CD8-positive, alpha-beta T cell (primary cell): ENCODE measurements at regions of chr2 and their contacts with region 1.

Region 1: DNA sequence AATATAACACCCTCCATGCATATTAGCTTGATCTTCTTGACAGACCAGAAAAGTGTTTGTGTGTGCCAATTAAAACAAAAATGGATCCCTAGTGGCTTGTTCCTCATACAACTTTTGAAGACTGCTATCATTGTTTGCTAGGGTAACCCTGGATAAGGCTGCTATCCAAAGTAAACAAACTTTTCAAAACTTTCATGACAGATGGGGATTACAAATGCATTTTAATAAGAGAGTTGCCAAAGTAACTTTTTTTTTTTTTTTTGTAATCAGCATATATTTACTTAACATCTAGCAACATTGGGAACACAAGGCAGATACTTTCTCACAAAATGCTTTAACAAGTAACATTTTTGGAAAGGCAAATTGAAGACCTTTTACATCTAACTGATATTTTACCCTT is 300.7 kb downstream of the ARHGAP15 start:
- DNase-seq: no peak
- ATAC-seq: no peak
- H3K4me3 ChIP-seq: no peak overlapping the region
- H3K4me3 Mint-ChIP-seq: no peak overlapping the region
- H3K27ac ChIP-seq: no peak overlapping the region
- H3K27ac Mint-ChIP-seq: peak overlapping the region; percentile 72
- H3K4me1 ChIP-seq: no peaks in the 10 kb centered on the region
- H3K4me1 Mint-ChIP-seq: peaks cover 80% of the 10 kb centered on the region
- H3K27me3 ChIP-seq: no peaks in the 10 kb centered on the region
- H3K27me3 Mint-ChIP-seq: no peaks in the 10 kb centered on the region
- CTCF ChIP-seq: no peak

Region 2: GRCh38 chr2:143442193-143442592 is 12.3 kb after region 1 on chr2:
- CTCF ChIA-PET with region 1: interaction called, 4 read pairs
- POLR2A ChIA-PET with region 1: no interaction called
- intact Hi-C with region 1: loop called in 1 of 2 experiments (anchors 2 kb)
- DNase-seq: no peak
- ATAC-seq: no peak
- H3K4me3 ChIP-seq: no peak overlapping the region
- H3K4me3 Mint-ChIP-seq: no peak overlapping the region
- H3K27ac ChIP-seq: no peak overlapping the region
- H3K27ac Mint-ChIP-seq: no peak overlapping the region
- H3K4me1 ChIP-seq: no peaks in the 10 kb centered on the region
- H3K4me1 Mint-ChIP-seq: peaks cover 13% of the 10 kb centered on the region
- H3K27me3 ChIP-seq: no peaks in the 10 kb centered on the region
- H3K27me3 Mint-ChIP-seq: no peaks in the 10 kb centered on the region
- CTCF ChIP-seq: no peak

Region 3: GRCh38 chr2:145273840-145274239 is 1843.9 kb after region 1 on chr2:
- CTCF ChIA-PET with region 1: no interaction called
- POLR2A ChIA-PET with region 1: no interaction called
- intact Hi-C with region 1: no loop called
- DNase-seq: peak in 1 of 9 experiments; percentile 14
- ATAC-seq: no peak
- H3K4me3 ChIP-seq: no peak overlapping the region
- H3K4me3 Mint-ChIP-seq: no peak overlapping the region
- H3K27ac ChIP-seq: no peak overlapping the region
- H3K27ac Mint-ChIP-seq: no peak overlapping the region
- H3K4me1 ChIP-seq: no peaks in the 10 kb centered on the region
- H3K4me1 Mint-ChIP-seq: no peaks in the 10 kb centered on the region
- H3K27me3 ChIP-seq: peaks cover 0 to 2% of the 10 kb centered on the region in 2 experiments
- H3K27me3 Mint-ChIP-seq: peaks cover 2% of the 10 kb centered on the region
- CTCF ChIP-seq: no peak